Activated CD8-positive, alpha-beta T cell treated with anti-CD3 and anti-CD28 coated beads for 36 hours (primary cell): ENCODE measurements at regions of chr1 and their contacts with region 1.

Region 1: DNA sequence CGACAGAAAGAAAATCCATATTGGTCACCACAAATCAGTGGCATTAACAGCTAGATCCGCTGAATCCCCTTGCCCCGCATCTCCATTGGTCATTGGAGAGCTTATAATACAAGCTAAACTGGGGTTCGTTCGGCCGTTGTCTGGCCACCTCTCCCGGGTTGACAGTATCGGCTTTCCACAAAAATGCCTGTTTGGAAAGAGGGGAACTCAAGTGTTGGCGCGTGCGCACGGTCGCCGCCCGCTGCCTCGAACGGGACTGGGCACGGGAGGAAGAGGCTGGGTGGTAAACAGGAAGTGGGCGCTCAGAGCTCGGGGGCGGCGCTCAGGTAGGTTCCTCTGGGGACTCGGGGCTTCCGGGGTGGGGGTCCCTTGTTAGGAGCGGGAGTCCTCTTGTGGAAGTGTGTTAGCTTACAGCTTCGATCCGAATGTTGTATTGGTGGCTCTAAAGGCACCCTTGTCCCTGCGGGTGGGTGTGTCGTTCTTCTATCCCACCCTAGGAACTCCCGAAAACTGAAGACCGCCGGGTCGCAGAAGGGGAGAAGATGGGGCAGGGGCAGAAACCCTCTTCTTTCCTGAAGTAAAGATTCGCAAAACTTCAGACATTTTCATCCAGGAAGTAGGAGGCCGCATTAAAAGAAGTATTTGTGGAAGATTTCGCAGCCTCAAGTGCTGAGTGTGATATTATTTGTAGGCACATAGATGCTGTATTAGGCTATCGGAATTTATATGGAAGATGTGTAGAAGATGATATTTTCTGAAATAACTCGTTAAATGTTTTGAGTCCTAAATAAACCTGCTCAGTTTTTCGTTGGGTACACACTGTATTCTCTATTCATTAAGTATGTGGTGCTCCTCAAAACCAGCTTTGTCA is 962 bp downstream of the BROX start:
- DNase-seq: peak; percentile 95
- ATAC-seq: peak; percentile 73
- H3K4me3 Mint-ChIP-seq: peak overlapping the region; percentile 94
- H3K27ac Mint-ChIP-seq: peak overlapping the region; percentile 100
- H3K4me1 Mint-ChIP-seq: peaks cover 41% of the 10 kb centered on the region
- H3K27me3 Mint-ChIP-seq: no peaks in the 10 kb centered on the region
- CTCF ChIP-seq: no peak

Region 2: GRCh38 chr1:222224636-222225315 is 488.6 kb before region 1 on chr1:
- CTCF ChIA-PET with region 1: no interaction called
- POLR2A ChIA-PET with region 1: no interaction called
- intact Hi-C with region 1: no loop called
- DNase-seq: no peak
- ATAC-seq: no peak
- H3K4me3 Mint-ChIP-seq: no peak overlapping the region
- H3K27ac Mint-ChIP-seq: no peak overlapping the region
- H3K4me1 Mint-ChIP-seq: no peaks in the 10 kb centered on the region
- H3K27me3 Mint-ChIP-seq: no peaks in the 10 kb centered on the region
- CTCF ChIP-seq: no peak

Region 3: GRCh38 chr1:222465211-222466041 is 247.9 kb before region 1 on chr1:
- CTCF ChIA-PET with region 1: no interaction called
- POLR2A ChIA-PET with region 1: no interaction called
- intact Hi-C with region 1: loop called (anchors 10 kb)
- DNase-seq: peak; percentile 81
- ATAC-seq: peak; percentile 98
- H3K4me3 Mint-ChIP-seq: peak overlapping the region; percentile 67
- H3K27ac Mint-ChIP-seq: peak overlapping the region; percentile 88
- H3K4me1 Mint-ChIP-seq: peaks cover 8% of the 10 kb centered on the region
- H3K27me3 Mint-ChIP-seq: no peaks in the 10 kb centered on the region
- CTCF ChIP-seq: peak; percentile 99

Region 4: GRCh38 chr1:222557148-222557547 is 156.2 kb before region 1 on chr1:
- CTCF ChIA-PET with region 1: no interaction called
- POLR2A ChIA-PET with region 1: no interaction called
- intact Hi-C with region 1: no loop called
- DNase-seq: no peak
- ATAC-seq: no peak
- H3K4me3 Mint-ChIP-seq: no peak overlapping the region
- H3K27ac Mint-ChIP-seq: no peak overlapping the region
- H3K4me1 Mint-ChIP-seq: no peaks in the 10 kb centered on the region
- H3K27me3 Mint-ChIP-seq: no peaks in the 10 kb centered on the region
- CTCF ChIP-seq: no peak

Region 5: GRCh38 chr1:222654849-222655248 is 58.5 kb before region 1 on chr1:
- CTCF ChIA-PET with region 1: interaction called, 3 read pairs
- POLR2A ChIA-PET with region 1: interaction called, 23 read pairs
- intact Hi-C with region 1: loop called (anchors 5 kb)
- DNase-seq: peak; percentile 86
- ATAC-seq: peak; percentile 85
- H3K4me3 Mint-ChIP-seq: peak overlapping the region; percentile 38
- H3K27ac Mint-ChIP-seq: peak overlapping the region; percentile 88
- H3K4me1 Mint-ChIP-seq: peaks cover 56% of the 10 kb centered on the region
- H3K27me3 Mint-ChIP-seq: no peaks in the 10 kb centered on the region
- CTCF ChIP-seq: peak; percentile 16